ENCODE measurements at regions of chr14 and their contacts with region 1.

Region 1: GRCh38 chr14:72926292-72927028 is at the start of gene DCAF4:
- DNase-seq: peak; percentile 99
- ATAC-seq: peak; percentile 96
- H3K4me3 ChIP-seq: peak within 1 kb of the TSS; percentile 77
- H3K27ac ChIP-seq: peak within 1 kb of the TSS; percentile 63
- H3K4me1 ChIP-seq: peaks cover 12% of the 10 kb centered on the region
- H3K27me3 ChIP-seq: no peaks in the 10 kb centered on the region
- CTCF ChIP-seq: no peak
- total RNA-seq, gene DCAF4: 55.8 and 56.8 TPM in 2 replicates

Region 2: DNA sequence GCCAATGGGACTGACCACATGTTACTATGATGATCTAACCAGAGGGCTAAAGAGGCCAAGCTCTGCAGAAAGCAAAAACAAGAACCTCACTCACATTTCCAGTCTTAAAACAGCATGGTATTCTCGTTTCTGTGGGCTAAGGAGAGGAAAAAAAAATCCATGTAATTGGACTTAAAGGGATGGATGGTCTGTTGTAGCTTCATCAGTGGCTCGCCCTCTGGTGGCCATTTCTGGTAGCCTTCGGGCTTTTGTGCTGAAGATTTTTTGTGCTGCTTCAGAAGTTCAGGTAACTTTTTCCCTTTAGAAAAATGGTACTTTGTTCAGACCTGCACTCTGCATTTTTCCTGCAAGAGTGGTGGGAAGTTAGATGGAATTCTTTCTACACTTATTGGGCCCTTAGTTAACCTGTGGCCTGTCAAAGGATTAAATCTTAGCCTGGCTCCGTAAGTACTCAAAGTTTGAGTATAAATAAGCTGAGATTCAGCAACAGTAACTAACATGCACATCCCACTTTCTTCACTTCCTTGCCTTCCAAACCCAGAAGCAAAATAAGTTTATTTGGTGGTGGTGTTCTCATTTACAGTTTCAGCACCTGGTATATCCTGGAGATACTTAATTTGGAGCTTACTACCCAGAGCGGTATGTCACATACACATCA is 22.1 kb after region 1 on chr14:
- CTCF ChIA-PET with region 1: interaction called, 4 read pairs
- POLR2A ChIA-PET with region 1: interaction called, 3 read pairs
- intact Hi-C with region 1: loop called (anchors 1 kb)
- DNase-seq: peak; percentile 86
- ATAC-seq: peak; percentile 38
- H3K4me3 ChIP-seq: no peak overlapping the region
- H3K27ac ChIP-seq: no peak overlapping the region
- H3K4me1 ChIP-seq: peaks cover 17% of the 10 kb centered on the region
- H3K27me3 ChIP-seq: no peaks in the 10 kb centered on the region
- CTCF ChIP-seq: peak; percentile 99

Measured in PC-3 (cell line).